Activated CD4-positive, alpha-beta T cell treated with anti-CD3 and anti-CD28 coated beads for 36 hours (primary cell): ENCODE measurements at regions of chr17 and their contacts with region 1.

Region 1: DNA sequence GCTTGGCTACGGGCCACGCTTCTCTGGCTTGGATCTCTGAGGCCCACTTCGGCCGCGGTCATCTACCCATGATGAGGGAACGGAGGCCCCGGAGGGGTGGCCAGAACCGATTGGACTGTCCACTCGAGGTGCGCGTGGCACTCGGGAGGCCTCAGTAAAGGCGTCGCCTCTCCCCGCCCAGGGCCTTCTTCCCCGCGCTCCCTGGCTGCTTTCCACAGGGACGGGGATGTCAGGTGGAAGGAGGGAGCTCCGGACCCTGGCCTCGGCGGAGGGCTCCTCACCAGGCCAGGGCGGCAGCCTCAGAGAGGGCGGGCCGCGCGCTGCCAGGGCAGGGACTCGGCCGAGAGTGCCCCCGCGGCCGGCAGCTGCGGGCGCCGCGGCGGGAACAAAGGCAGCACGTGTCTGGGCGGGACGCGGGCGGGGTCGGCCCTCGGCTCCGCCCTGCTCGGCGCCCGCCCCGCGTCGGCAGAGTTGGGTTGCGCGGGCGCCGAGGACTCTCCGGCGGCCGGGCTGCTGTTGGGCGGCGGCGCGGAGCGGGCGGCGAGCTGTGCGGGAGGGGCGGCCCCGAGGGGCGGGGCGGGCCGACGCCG is 587 bp upstream of the CDK5R1 start:
- DNase-seq: peak; percentile 82
- ATAC-seq: peak; percentile 71
- H3K4me3 Mint-ChIP-seq: peak overlapping the region; percentile 54
- H3K27ac Mint-ChIP-seq: no peak overlapping the region
- H3K4me1 Mint-ChIP-seq: peaks cover 48% of the 10 kb centered on the region
- H3K27me3 Mint-ChIP-seq: no peaks in the 10 kb centered on the region

Region 2: DNA sequence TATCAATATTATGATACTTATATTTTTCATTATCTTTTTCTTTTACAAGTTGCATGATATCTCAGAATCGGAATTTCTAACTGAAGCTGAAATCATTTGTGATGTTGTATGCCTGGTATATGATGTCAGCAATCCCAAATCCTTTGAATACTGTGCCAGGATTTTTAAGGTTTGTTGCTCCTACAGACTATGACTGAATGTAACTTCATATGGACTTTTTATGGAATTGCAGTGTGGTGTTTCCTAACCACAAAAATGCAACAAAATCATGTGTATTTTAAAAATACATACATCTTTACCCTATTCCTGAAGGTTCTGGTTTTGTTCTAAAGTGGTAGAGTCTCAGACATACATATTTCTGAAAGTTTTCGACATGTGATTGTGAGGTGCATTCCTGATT is 279.3 kb before region 1 on chr17:
- CTCF ChIA-PET with region 1: no interaction called
- POLR2A ChIA-PET with region 1: no interaction called
- intact Hi-C with region 1: no loop called
- DNase-seq: no peak
- ATAC-seq: no peak
- H3K4me3 Mint-ChIP-seq: no peak overlapping the region
- H3K27ac Mint-ChIP-seq: no peak overlapping the region
- H3K4me1 Mint-ChIP-seq: no peaks in the 10 kb centered on the region
- H3K27me3 Mint-ChIP-seq: no peaks in the 10 kb centered on the region

Region 3: GRCh38 chr17:32429598-32429997 is 56.6 kb before region 1 on chr17:
- CTCF ChIA-PET with region 1: no interaction called
- POLR2A ChIA-PET with region 1: no interaction called
- intact Hi-C with region 1: no loop called
- DNase-seq: no peak
- ATAC-seq: no peak
- H3K4me3 Mint-ChIP-seq: no peak overlapping the region
- H3K27ac Mint-ChIP-seq: no peak overlapping the region
- H3K4me1 Mint-ChIP-seq: no peaks in the 10 kb centered on the region
- H3K27me3 Mint-ChIP-seq: no peaks in the 10 kb centered on the region

Region 4: GRCh38 chr17:32461853-32462617 is 24.2 kb before region 1 on chr17:
- CTCF ChIA-PET with region 1: interaction called, 67 read pairs
- POLR2A ChIA-PET with region 1: no interaction called
- intact Hi-C with region 1: no loop called
- DNase-seq: peak; percentile 83
- ATAC-seq: peak; percentile 79
- H3K4me3 Mint-ChIP-seq: no peak overlapping the region
- H3K27ac Mint-ChIP-seq: peak overlapping the region; percentile 56
- H3K4me1 Mint-ChIP-seq: peaks cover 33% of the 10 kb centered on the region
- H3K27me3 Mint-ChIP-seq: no peaks in the 10 kb centered on the region

Region 5: GRCh38 chr17:32551186-32551955 is 65.2 kb after region 1 on chr17:
- CTCF ChIA-PET with region 1: interaction called, 4 read pairs
- POLR2A ChIA-PET with region 1: no interaction called
- intact Hi-C with region 1: loop called in 1 of 2 experiments (anchors 2 kb)
- DNase-seq: peak; percentile 13
- ATAC-seq: peak; percentile 90
- H3K4me3 Mint-ChIP-seq: no peak overlapping the region
- H3K27ac Mint-ChIP-seq: peak overlapping the region; percentile 40
- H3K4me1 Mint-ChIP-seq: peaks cover 42% of the 10 kb centered on the region
- H3K27me3 Mint-ChIP-seq: no peaks in the 10 kb centered on the region

Region 6: DNA sequence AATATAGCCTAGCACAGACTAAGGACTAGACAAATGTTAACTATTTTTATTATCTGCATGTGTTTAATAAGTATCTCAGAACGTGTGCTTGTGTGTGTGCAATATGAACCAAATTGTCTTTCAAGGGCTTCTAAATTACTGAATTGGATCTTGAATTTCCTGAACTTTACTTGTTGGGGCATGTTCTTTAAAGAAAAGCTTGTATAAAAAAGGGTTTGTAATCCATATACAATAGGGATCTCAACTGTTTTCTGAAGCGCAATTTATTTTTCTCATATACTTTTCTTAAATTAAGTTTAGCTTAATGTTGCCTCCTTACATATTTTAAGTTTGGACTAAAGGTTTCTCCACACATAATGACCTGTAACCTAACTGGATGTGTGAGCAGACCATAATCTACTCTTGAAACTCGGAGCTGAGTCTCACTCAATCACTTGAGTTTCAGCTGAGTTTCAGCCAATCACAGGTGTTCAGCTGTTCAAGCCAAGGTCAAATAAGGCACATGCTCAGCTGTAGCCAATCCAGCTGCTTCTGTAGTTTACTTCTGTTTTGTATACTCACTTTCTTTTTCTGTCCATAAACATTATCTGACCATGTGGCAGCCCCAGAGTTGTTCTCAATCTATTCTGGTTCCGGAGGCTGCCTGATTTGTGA is 72.9 kb after region 1 on chr17:
- CTCF ChIA-PET with region 1: no interaction called
- POLR2A ChIA-PET with region 1: no interaction called
- intact Hi-C with region 1: loop called in 1 of 2 experiments (anchors 2 kb)
- DNase-seq: no peak
- ATAC-seq: peak; percentile 48
- H3K4me3 Mint-ChIP-seq: no peak overlapping the region
- H3K27ac Mint-ChIP-seq: no peak overlapping the region
- H3K4me1 Mint-ChIP-seq: peaks cover 28% of the 10 kb centered on the region
- H3K27me3 Mint-ChIP-seq: no peaks in the 10 kb centered on the region

Region 7: DNA sequence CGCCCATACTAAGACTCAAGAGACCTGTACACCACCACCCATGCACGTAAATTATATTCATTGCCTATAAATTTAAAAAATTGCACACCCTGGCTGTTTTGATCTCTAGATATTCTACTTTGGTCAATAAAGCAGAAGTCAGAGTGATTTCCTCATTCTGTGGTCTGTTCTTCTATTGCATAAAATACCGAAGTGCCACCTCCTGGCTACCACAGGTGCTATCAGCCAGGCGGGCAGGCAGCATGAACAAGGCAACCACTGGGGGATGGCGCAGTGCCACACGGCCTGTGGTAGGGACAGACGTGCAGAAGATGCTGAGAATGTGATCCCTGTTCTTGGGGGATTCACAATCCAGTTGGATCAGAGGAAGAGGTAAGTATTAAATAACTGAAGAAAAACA is 122.9 kb after region 1 on chr17:
- CTCF ChIA-PET with region 1: interaction called, 6 read pairs
- POLR2A ChIA-PET with region 1: no interaction called
- intact Hi-C with region 1: loop called in 1 of 2 experiments (anchors 1 kb)
- DNase-seq: peak; percentile 88
- ATAC-seq: peak; percentile 100
- H3K4me3 Mint-ChIP-seq: no peak overlapping the region
- H3K27ac Mint-ChIP-seq: no peak overlapping the region
- H3K4me1 Mint-ChIP-seq: peaks cover 8% of the 10 kb centered on the region
- H3K27me3 Mint-ChIP-seq: no peaks in the 10 kb centered on the region

Region 8: DNA sequence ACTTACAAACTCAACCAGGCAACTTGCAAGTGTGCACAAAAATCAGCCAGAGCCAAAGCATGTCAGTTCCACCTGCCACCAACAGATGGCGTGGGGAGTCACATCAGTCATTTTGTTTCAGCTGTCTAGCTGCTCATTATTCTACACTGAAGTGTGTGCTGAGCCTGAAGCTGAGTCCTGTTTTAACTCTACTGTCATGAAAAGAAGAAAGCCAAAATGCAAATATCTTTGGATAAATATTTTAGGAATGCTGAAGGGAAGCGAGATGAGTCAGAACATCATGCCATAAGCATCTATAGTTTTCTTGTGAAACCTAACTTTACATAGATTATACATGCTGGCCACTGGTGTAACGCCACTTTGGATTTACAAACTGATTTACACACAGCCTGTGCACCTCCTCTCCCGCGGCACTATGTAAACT is 173.2 kb after region 1 on chr17:
- CTCF ChIA-PET with region 1: interaction called, 7 read pairs
- POLR2A ChIA-PET with region 1: no interaction called
- intact Hi-C with region 1: loop called in 1 of 2 experiments (anchors 2 kb)
- DNase-seq: peak; percentile 81
- ATAC-seq: peak; percentile 74
- H3K4me3 Mint-ChIP-seq: no peak overlapping the region
- H3K27ac Mint-ChIP-seq: no peak overlapping the region
- H3K4me1 Mint-ChIP-seq: no peaks in the 10 kb centered on the region
- H3K27me3 Mint-ChIP-seq: no peaks in the 10 kb centered on the region